GM12878 (cell line): ENCODE measurements at regions of chr21 and their contacts with region 1.

Region 1: DNA sequence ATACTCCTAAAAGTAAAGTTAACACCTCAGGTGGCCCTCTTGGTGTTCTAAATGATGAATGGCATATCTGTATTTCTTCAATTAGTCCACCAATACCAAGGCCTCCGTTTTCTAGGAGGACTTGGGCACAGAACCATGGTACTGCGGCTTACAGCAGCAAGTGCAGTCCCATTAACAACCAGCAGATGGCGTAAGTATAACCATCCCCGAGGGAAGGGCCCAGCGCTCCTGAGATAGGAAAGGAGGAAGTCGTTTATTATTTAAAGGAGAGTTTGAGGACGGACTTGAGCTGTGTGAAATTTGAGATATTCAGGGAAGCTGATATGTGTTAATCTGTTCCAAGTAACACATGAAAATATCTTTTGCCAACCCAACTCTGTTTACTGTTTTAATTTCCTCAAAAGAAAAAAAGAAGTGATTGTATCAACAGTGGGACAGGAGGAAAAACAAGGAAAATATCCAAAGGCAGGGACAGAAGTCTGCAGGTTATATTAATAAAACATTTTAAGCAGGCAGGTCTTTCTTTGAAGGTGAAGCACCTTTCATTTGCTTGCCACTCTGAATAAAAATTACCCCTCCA is 37.7 kb upstream of the KCNJ15 start:
- DNase-seq: no peak
- ATAC-seq: peak; percentile 76
- H3K4me3 ChIP-seq: no peak overlapping the region
- H3K27ac ChIP-seq: no peak overlapping the region
- H3K4me1 ChIP-seq: no peaks in the 10 kb centered on the region
- H3K27me3 ChIP-seq: no peaks in the 10 kb centered on the region
- CTCF ChIP-seq: peak; percentile 77 to 90 (median 81)
- EP300 ChIP-seq: no peak
- POLR2A ChIP-seq: no peak
- RAD21 ChIP-seq: peak; percentile 75

Region 2: GRCh38 chr21:37532868-37533780 is 686.0 kb before region 1 on chr21:
- CTCF ChIA-PET with region 1: no interaction called
- POLR2A ChIA-PET with region 1: no interaction called
- RAD21 ChIA-PET with region 1: no interaction called
- SMC1A ChIA-PET with region 1: no interaction called
- in situ Hi-C with region 1: no loop called
- intact Hi-C with region 1: no loop called
- DNase-seq: no peak
- ATAC-seq: peak; percentile 77
- H3K4me3 ChIP-seq: no peak overlapping the region
- H3K27ac ChIP-seq: no peak overlapping the region
- H3K4me1 ChIP-seq: peaks cover 3% of the 10 kb centered on the region; the same call in 1 of the 2 replicates
- H3K27me3 ChIP-seq: no peaks in the 10 kb centered on the region; a peak in 1 of 4 replicates
- CTCF ChIP-seq: peak in 2 of 3 experiments; percentile 29 to 35; a peak in 2 of 6 replicates
- EP300 ChIP-seq: no peak
- POLR2A ChIP-seq: no peak
- RAD21 ChIP-seq: 0 out of 2 replicates have a peak, but pooled peaks have one; percentile 30

Region 3: DNA sequence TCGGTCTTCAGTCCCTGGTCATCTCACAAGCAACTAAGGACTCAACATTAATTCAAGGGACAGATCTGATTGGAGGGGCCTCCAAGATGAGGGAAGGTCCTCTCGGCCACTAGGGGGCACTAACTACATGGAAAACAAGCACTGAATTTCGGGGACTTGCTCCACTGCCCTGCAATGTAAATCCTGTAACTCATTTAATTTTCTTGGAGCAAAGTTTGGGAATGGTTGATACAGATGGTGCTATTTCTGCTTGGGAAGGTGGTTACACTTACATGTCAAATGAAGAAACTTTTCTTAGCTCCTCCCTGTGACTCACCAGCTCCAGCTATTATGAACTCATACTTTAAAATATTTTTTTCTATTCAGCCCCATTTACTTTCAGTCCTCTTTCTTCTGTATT is 59.8 kb before region 1 on chr21:
- CTCF ChIA-PET with region 1: interaction called, 6 read pairs
- POLR2A ChIA-PET with region 1: no interaction called
- RAD21 ChIA-PET with region 1: interaction called, 3 read pairs
- SMC1A ChIA-PET with region 1: interaction called, 3 read pairs
- in situ Hi-C with region 1: no loop called
- intact Hi-C with region 1: loop called (anchors 2 kb)
- DNase-seq: peak; percentile 19
- ATAC-seq: peak; percentile 88
- H3K4me3 ChIP-seq: no peak overlapping the region
- H3K27ac ChIP-seq: no peak overlapping the region
- H3K4me1 ChIP-seq: no peaks in the 10 kb centered on the region
- H3K27me3 ChIP-seq: no peaks in the 10 kb centered on the region; a peak in 1 of 4 replicates
- CTCF ChIP-seq: peak; percentile 71 to 78 (median 74)
- EP300 ChIP-seq: no peak
- POLR2A ChIP-seq: no peak
- RAD21 ChIP-seq: peak; percentile 63

Region 4: GRCh38 chr21:38229260-38229868 is 10.2 kb after region 1 on chr21:
- CTCF ChIA-PET with region 1: interaction called, 20 read pairs
- POLR2A ChIA-PET with region 1: interaction called, 3 read pairs
- RAD21 ChIA-PET with region 1: interaction called, 3 read pairs
- SMC1A ChIA-PET with region 1: interaction called, 33 read pairs
- in situ Hi-C with region 1: no loop called
- intact Hi-C with region 1: no loop called
- DNase-seq: no peak
- ATAC-seq: no peak
- H3K4me3 ChIP-seq: no peak overlapping the region
- H3K27ac ChIP-seq: no peak overlapping the region
- H3K4me1 ChIP-seq: no peaks in the 10 kb centered on the region
- H3K27me3 ChIP-seq: no peaks in the 10 kb centered on the region
- CTCF ChIP-seq: no peak
- EP300 ChIP-seq: no peak
- POLR2A ChIP-seq: no peak
- RAD21 ChIP-seq: no peak

Region 5: DNA sequence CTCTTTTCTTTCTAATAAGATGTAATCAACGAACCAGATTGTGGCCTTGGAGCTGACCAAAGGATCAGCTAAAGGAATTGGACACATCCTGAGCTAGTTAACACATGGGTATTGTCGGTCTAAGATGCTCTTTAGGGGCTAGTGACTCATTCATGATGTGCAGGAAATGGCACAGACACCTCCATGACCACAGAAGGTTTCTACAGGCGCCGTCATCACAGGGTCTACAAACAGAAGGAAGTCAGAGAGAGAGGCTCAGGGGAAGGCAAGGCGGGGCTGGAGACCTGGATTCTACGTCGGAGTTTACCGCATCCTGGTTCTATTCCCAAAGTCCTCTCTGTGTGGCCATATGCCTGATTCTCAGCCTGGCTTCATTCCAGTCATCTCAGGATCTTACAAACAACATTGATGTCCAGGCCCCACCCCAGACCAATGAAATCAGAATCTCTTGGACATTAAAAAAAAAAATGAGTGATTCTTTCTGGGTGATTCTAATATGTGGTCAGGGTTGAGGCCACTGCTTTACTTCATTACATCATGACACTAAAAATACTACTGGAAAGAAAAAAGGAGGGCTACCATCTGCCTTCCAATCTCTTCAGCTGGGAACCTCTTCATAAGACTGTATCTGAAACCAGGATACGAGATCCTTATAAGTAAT is 25.9 kb after region 1 on chr21:
- CTCF ChIA-PET with region 1: interaction called, 27 read pairs
- POLR2A ChIA-PET with region 1: interaction called, 4 read pairs
- RAD21 ChIA-PET with region 1: interaction called, 20 read pairs
- SMC1A ChIA-PET with region 1: interaction called, 6 read pairs
- in situ Hi-C with region 1: no loop called
- intact Hi-C with region 1: loop called (anchors 1 kb)
- DNase-seq: peak; percentile 59
- ATAC-seq: peak; percentile 90
- H3K4me3 ChIP-seq: no peak overlapping the region
- H3K27ac ChIP-seq: no peak overlapping the region
- H3K4me1 ChIP-seq: peaks cover 16% of the 10 kb centered on the region
- H3K27me3 ChIP-seq: no peaks in the 10 kb centered on the region
- CTCF ChIP-seq: no peak
- EP300 ChIP-seq: peak; percentile 34 to 87; a peak in 2 of 4 replicates
- POLR2A ChIP-seq: no peak
- RAD21 ChIP-seq: no peak

Region 6: GRCh38 chr21:38289705-38290485 is 70.8 kb after region 1 on chr21:
- CTCF ChIA-PET with region 1: interaction called, 16 read pairs
- POLR2A ChIA-PET with region 1: interaction called, 3 read pairs
- RAD21 ChIA-PET with region 1: interaction called, 4 read pairs
- SMC1A ChIA-PET with region 1: interaction called, 12 read pairs
- in situ Hi-C with region 1: no loop called
- intact Hi-C with region 1: no loop called
- DNase-seq: no peak
- ATAC-seq: peak; percentile 64
- H3K4me3 ChIP-seq: no peak overlapping the region
- H3K27ac ChIP-seq: no peak overlapping the region
- H3K4me1 ChIP-seq: no peaks in the 10 kb centered on the region
- H3K27me3 ChIP-seq: no peaks in the 10 kb centered on the region
- CTCF ChIP-seq: no peak
- EP300 ChIP-seq: no peak
- POLR2A ChIP-seq: no peak
- RAD21 ChIP-seq: no peak

Region 7: DNA sequence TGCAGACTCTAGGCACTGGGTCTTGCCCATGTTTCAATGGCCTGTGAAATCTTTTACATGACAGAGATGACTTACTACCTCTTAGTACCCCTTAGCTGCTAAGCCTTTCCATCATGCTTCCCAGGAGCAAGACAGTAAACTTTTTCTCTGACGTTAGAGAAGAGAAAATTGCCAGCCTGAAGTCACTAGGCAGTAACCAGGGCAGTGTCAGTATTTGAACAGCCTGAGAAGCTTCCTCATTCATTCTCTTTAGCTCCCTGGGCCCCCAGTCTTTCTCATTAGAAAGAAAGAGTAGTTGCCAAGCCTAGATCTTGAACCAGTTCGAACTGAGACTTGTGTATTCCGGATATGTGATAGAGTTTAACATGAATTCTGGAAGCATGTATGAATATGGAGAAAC is 180.0 kb after region 1 on chr21:
- CTCF ChIA-PET with region 1: no interaction called
- POLR2A ChIA-PET with region 1: no interaction called
- RAD21 ChIA-PET with region 1: no interaction called
- SMC1A ChIA-PET with region 1: no interaction called
- in situ Hi-C with region 1: no loop called
- intact Hi-C with region 1: no loop called
- DNase-seq: no peak
- ATAC-seq: no peak
- H3K4me3 ChIP-seq: no peak overlapping the region
- H3K27ac ChIP-seq: no peak overlapping the region
- H3K4me1 ChIP-seq: no peaks in the 10 kb centered on the region
- H3K27me3 ChIP-seq: no peaks in the 10 kb centered on the region; a peak in 1 of 4 replicates
- CTCF ChIP-seq: no peak
- EP300 ChIP-seq: no peak
- POLR2A ChIP-seq: no peak
- RAD21 ChIP-seq: no peak